ENCODE measurements at regions of chr3 and their contacts with region 1.

Region 1: GRCh38 chr3:58630076-58630709 is 36.4 kb downstream of the FAM3D start:
- DNase-seq: peak; percentile 77
- ATAC-seq: peak; percentile 66
- H3K4me3 Mint-ChIP-seq: no peak overlapping the region
- H3K27ac Mint-ChIP-seq: no peak overlapping the region
- H3K4me1 Mint-ChIP-seq: no peaks in the 10 kb centered on the region
- H3K27me3 Mint-ChIP-seq: peaks cover 5% of the 10 kb centered on the region

Region 2: DNA sequence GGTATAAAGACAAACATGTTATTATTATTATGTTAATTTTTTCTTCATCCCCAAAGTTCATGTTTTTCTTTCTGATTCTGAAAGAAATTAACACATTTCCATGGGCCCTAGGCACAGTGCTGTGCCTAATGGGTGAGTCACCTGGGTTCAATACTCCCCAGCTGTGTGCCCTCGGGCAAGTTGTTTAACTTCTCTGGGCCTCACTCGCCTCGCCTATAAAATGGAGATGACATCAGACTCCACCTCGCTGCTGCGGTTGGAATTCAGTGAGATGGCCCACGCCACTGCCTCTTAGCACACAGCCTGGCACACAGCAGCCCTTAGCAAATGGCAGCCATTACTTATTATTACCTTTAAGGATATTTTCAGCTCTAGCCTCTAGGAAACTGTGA is 442.0 kb before region 1 on chr3:
- CTCF ChIA-PET with region 1: interaction called, 3 read pairs
- POLR2A ChIA-PET with region 1: no interaction called
- intact Hi-C with region 1: loop called in 1 of 2 experiments (anchors 2 kb)
- DNase-seq: no peak
- ATAC-seq: peak; percentile 63
- H3K4me3 Mint-ChIP-seq: no peak overlapping the region
- H3K27ac Mint-ChIP-seq: no peak overlapping the region
- H3K4me1 Mint-ChIP-seq: no peaks in the 10 kb centered on the region
- H3K27me3 Mint-ChIP-seq: no peaks in the 10 kb centered on the region

Region 3: DNA sequence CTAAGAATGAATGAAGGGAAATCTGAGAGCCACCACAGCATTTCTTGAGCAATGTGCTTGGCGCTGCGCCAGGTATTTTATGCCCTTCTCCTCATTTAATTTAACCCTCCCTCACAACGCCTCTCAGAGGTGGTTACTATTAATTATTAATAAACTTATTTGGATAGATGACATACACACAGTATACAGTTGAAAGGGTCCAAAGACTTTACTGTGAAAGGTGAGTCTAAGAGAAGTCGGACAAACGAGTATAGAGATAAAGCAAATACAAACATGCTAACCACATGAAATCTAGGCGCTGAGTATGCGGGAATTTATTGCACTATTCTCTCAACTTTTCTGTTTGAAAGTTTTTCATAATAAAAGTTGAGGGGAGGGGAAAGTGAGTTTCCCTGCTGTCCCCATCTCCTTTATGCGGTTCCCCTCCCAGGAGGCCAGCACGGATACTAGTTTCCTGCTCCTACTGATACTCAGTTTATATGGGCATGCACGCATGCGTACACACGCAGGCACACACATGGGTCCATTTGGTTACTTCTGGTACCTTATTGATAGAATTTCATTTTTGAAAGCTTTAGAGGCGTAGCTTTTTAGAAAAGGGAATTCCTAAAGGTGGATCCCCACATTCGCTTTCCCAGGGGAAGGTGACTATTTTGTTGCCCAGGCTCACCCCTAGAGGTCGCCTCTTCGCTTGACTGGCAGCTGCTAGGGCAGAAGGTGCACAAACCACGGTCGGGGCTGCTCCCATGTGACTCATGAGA is 166.8 kb before region 1 on chr3:
- CTCF ChIA-PET with region 1: no interaction called
- POLR2A ChIA-PET with region 1: no interaction called
- intact Hi-C with region 1: loop called in 1 of 2 experiments (anchors 1 kb)
- DNase-seq: peak; percentile 91
- ATAC-seq: peak; percentile 97
- H3K4me3 Mint-ChIP-seq: no peak overlapping the region
- H3K27ac Mint-ChIP-seq: peak overlapping the region; percentile 25
- H3K4me1 Mint-ChIP-seq: peaks cover 14% of the 10 kb centered on the region
- H3K27me3 Mint-ChIP-seq: no peaks in the 10 kb centered on the region

Region 4: DNA sequence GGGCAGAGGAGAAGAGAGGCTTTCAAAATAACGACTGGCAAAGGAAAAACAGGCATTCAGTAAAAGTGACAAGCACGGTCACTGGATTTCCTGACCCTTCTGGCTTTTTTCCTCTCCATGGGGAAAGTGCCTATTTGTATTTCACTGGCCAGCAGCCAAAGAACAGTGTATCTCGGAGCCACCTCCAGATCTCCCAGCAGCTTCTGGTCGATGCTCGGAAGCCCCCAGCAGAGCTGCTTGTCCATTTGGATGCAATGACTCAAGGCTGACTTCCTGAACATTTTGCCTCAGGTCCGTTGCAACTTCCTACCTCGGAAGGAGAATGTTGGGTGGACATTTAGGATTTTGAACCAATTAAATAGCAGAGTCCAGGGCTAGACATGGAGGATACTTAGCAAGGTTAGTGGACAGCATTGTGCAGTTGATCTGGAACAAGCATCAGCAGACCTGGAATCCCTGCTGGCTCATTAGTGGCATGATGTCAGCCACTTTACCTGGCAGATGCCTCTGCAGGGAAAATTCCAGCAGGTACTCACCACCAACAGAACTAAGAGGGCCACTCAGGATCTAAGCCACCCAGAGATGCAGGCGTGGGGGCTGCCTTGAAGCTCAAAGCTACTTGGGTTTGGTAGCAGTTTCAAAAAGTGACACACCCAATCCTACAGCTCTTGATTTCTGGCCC is 54.1 kb before region 1 on chr3:
- CTCF ChIA-PET with region 1: interaction called, 13 read pairs
- POLR2A ChIA-PET with region 1: no interaction called
- intact Hi-C with region 1: no loop called
- DNase-seq: no peak
- ATAC-seq: no peak
- H3K4me3 Mint-ChIP-seq: no peak overlapping the region
- H3K27ac Mint-ChIP-seq: no peak overlapping the region
- H3K4me1 Mint-ChIP-seq: no peaks in the 10 kb centered on the region
- H3K27me3 Mint-ChIP-seq: no peaks in the 10 kb centered on the region

Region 5: DNA sequence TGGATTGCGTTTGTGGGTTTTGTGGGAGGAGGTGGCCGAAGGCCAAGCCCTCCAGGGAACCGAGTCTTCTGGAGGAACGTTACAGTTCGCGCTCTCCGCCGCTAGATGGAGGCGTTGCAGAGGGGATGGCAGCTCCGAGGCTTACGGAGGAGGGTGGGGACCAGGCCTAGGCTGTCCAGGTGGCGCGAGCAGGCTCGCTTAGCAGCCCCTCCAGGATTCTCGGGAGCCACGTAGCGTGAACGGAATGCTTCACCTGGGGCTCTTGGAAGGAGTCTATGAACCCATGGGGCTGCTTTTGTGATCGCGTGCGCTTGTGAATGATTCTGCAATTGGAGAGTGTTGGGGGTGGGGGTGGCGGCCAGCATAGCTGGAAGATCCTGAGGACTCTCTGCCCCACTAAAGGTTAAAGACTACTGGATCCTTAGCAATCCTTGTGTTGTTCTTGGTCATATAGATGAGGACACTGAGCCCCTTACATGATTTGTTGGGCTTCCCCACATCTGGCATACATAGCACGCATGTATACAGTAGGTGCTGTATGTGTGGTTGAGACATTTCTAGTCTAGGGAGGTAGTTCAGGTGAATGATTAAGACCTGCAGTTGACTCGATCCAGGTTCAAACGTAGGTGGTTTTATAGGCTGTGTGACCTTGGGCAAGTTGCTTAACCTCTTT is 10.6 kb after region 1 on chr3:
- CTCF ChIA-PET with region 1: interaction called, 31 read pairs
- POLR2A ChIA-PET with region 1: no interaction called
- intact Hi-C with region 1: no loop called
- DNase-seq: peak; percentile 81
- ATAC-seq: peak; percentile 96
- H3K4me3 Mint-ChIP-seq: no peak overlapping the region
- H3K27ac Mint-ChIP-seq: no peak overlapping the region
- H3K4me1 Mint-ChIP-seq: no peaks in the 10 kb centered on the region
- H3K27me3 Mint-ChIP-seq: peaks cover 1% of the 10 kb centered on the region